CD4-positive, alpha-beta T cell (primary cell): ENCODE measurements at regions of chr9 and their contacts with region 1.

Region 1: GRCh38 chr9:5886114-5886939 is 4.4 kb upstream of the MLANA start:
- DNase-seq: peak; percentile 66 to 86 (median 73)
- ATAC-seq: peak; percentile 94
- H3K4me3 ChIP-seq: no peak overlapping the region
- H3K4me3 Mint-ChIP-seq: no peak overlapping the region
- H3K27ac ChIP-seq: no peak overlapping the region
- H3K27ac Mint-ChIP-seq: no peak overlapping the region
- H3K4me1 ChIP-seq: peaks cover 10% of the 10 kb centered on the region
- H3K4me1 Mint-ChIP-seq: no peaks in the 10 kb centered on the region
- H3K27me3 ChIP-seq: no peaks in the 10 kb centered on the region
- H3K27me3 Mint-ChIP-seq: no peaks in the 10 kb centered on the region
- CTCF ChIP-seq: peak; percentile 90

Region 2: DNA sequence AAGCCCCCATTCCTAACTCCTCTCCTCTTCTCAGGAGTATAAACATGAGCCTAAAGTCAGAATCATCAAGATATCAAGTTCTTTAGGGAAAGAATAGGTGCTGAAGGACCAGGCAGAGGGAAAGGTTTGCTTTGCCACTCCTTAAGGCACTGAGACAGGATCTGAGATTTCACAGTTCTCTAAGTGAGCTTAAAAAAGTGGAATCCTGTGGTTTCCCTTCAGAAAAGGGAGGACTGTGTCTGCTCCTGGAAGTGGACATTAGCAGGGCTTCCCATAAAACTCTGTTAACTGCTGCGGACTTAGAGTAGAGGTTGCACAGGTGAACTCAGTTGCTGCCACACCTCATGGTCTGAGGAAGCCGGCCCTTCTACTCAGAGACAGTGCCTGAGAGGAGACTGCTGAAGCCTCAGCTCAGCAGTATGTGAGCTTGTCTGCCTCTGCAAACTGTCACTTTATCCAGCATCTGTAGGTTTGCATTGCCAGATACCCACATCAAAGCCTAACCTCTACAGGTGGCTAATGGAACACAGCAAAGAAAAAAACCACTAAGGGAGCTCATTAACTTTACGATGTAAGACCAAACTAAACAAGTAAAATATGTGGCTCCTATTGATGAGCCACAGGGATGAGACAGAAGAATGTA is 214.5 kb before region 1 on chr9:
- CTCF ChIA-PET with region 1: no interaction called
- POLR2A ChIA-PET with region 1: no interaction called
- intact Hi-C with region 1: no loop called
- DNase-seq: peak in 6 of 14 experiments; percentile 2 to 73 (median 48)
- ATAC-seq: peak; percentile 96
- H3K4me3 ChIP-seq: no peak overlapping the region
- H3K4me3 Mint-ChIP-seq: peak overlapping the region; percentile 26
- H3K27ac ChIP-seq: no peak overlapping the region
- H3K27ac Mint-ChIP-seq: peak overlapping the region; percentile 38
- H3K4me1 ChIP-seq: peaks cover 17% of the 10 kb centered on the region
- H3K4me1 Mint-ChIP-seq: peaks cover 47% of the 10 kb centered on the region
- H3K27me3 ChIP-seq: no peaks in the 10 kb centered on the region
- H3K27me3 Mint-ChIP-seq: no peaks in the 10 kb centered on the region
- CTCF ChIP-seq: no peak

Region 3: GRCh38 chr9:5805478-5805877 is 80.8 kb before region 1 on chr9:
- CTCF ChIA-PET with region 1: no interaction called
- POLR2A ChIA-PET with region 1: no interaction called
- intact Hi-C with region 1: no loop called
- DNase-seq: no peak
- ATAC-seq: no peak
- H3K4me3 ChIP-seq: no peak overlapping the region
- H3K4me3 Mint-ChIP-seq: no peak overlapping the region
- H3K27ac ChIP-seq: no peak overlapping the region
- H3K27ac Mint-ChIP-seq: no peak overlapping the region
- H3K4me1 ChIP-seq: no peaks in the 10 kb centered on the region
- H3K4me1 Mint-ChIP-seq: peaks cover 6% of the 10 kb centered on the region
- H3K27me3 ChIP-seq: no peaks in the 10 kb centered on the region
- H3K27me3 Mint-ChIP-seq: no peaks in the 10 kb centered on the region
- CTCF ChIP-seq: no peak

Region 4: GRCh38 chr9:6305954-6306563 is 419.7 kb after region 1 on chr9:
- CTCF ChIA-PET with region 1: no interaction called
- POLR2A ChIA-PET with region 1: no interaction called
- intact Hi-C with region 1: loop called (anchors 5 kb)
- DNase-seq: peak in 3 of 14 experiments; percentile 9 to 35 (median 32)
- ATAC-seq: no peak
- H3K4me3 ChIP-seq: no peak overlapping the region
- H3K4me3 Mint-ChIP-seq: no peak overlapping the region
- H3K27ac ChIP-seq: no peak overlapping the region
- H3K27ac Mint-ChIP-seq: no peak overlapping the region
- H3K4me1 ChIP-seq: no peaks in the 10 kb centered on the region
- H3K4me1 Mint-ChIP-seq: no peaks in the 10 kb centered on the region
- H3K27me3 ChIP-seq: peaks cover 3 to 20% of the 10 kb centered on the region in 2 experiments
- H3K27me3 Mint-ChIP-seq: peaks cover 16% of the 10 kb centered on the region
- CTCF ChIP-seq: no peak

Region 5: GRCh38 chr9:6566409-6567139 is 680.2 kb after region 1 on chr9:
- CTCF ChIA-PET with region 1: no interaction called
- POLR2A ChIA-PET with region 1: no interaction called
- intact Hi-C with region 1: loop called (anchors 5 kb)
- DNase-seq: peak in 3 of 14 experiments; percentile 12 to 56 (median 27)
- ATAC-seq: no peak
- H3K4me3 ChIP-seq: no peak overlapping the region
- H3K4me3 Mint-ChIP-seq: no peak overlapping the region
- H3K27ac ChIP-seq: no peak overlapping the region
- H3K27ac Mint-ChIP-seq: no peak overlapping the region
- H3K4me1 ChIP-seq: peaks cover 6% of the 10 kb centered on the region
- H3K4me1 Mint-ChIP-seq: no peaks in the 10 kb centered on the region
- H3K27me3 ChIP-seq: no peaks in the 10 kb centered on the region
- H3K27me3 Mint-ChIP-seq: peaks cover 7% of the 10 kb centered on the region
- CTCF ChIP-seq: no peak